ENCODE measurements at regions of chr3 and their contacts with region 1.

Region 1: DNA sequence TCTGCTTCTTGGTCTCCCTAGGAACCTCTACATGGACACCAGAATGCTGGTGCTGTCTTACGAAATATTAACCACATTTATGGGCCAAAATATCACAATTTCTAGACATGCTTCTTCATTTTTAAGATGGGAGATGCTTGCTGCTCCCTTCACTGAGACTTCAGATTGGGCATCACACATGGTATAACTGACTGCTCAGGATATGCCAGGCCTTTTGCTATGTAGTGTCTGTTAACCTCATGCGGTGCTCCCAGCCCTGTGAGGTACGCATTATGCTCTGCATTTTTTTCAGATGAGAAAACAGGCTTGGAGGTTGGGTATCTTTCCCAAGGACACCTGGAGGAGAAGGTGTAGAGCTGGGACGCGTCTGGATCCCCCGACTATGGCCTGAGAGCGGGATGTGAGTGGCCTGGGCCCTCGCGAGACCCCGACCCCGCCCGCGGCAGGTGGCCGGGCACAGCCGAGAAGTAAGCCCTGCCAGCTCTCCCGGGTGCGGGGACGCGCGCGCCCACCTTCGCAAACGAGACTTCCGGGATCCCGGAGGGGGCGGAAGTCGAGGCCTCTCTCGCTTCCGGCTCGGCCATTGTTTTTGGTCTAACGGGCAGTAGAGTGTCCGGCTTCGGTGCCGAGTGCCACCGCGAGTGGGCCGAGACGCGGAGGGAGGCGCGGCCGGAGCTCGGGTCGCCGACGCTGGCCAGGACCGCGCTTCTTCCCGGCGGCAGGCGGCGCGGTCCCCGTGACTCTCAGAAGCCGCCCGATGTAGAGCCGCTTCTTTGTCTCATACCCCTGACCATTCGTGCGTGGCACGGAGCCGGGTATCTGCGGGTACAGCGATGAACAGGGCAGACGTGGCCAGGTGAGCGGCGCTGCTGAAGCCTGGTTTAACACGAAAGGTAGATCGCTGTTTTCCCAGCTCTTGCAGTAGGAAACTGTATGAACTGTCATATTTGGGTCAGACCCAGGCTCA is at the start of gene ZKSCAN7:
- DNase-seq: peak in 13 of 14 experiments; percentile 7 to 59 (median 33)
- ATAC-seq: peak; percentile 54
- H3K4me3 ChIP-seq: peak within 1 kb of the TSS; percentile 65
- H3K4me3 Mint-ChIP-seq: peak within 1 kb of the TSS; percentile 91
- H3K27ac ChIP-seq: no peak within 1 kb of the TSS
- H3K27ac Mint-ChIP-seq: peak within 1 kb of the TSS; percentile 63
- H3K4me1 ChIP-seq: peaks cover 16% of the 10 kb centered on the region
- H3K4me1 Mint-ChIP-seq: peaks cover 27% of the 10 kb centered on the region
- H3K27me3 ChIP-seq: no peaks in the 10 kb centered on the region
- H3K27me3 Mint-ChIP-seq: peaks cover 8% of the 10 kb centered on the region
- CTCF ChIP-seq: no peak
- total RNA-seq, gene ZKSCAN7: 0.20 to 0.49 TPM

Region 2: GRCh38 chr3:44596621-44597020 is 41.7 kb after region 1 on chr3:
- CTCF ChIA-PET with region 1: no interaction called
- POLR2A ChIA-PET with region 1: no interaction called
- intact Hi-C with region 1: no loop called
- DNase-seq: no peak
- ATAC-seq: no peak
- H3K4me3 ChIP-seq: no peak overlapping the region
- H3K4me3 Mint-ChIP-seq: no peak overlapping the region
- H3K27ac ChIP-seq: no peak overlapping the region
- H3K27ac Mint-ChIP-seq: no peak overlapping the region
- H3K4me1 ChIP-seq: no peaks in the 10 kb centered on the region
- H3K4me1 Mint-ChIP-seq: no peaks in the 10 kb centered on the region
- H3K27me3 ChIP-seq: no peaks in the 10 kb centered on the region
- H3K27me3 Mint-ChIP-seq: no peaks in the 10 kb centered on the region
- CTCF ChIP-seq: no peak

Region 3: DNA sequence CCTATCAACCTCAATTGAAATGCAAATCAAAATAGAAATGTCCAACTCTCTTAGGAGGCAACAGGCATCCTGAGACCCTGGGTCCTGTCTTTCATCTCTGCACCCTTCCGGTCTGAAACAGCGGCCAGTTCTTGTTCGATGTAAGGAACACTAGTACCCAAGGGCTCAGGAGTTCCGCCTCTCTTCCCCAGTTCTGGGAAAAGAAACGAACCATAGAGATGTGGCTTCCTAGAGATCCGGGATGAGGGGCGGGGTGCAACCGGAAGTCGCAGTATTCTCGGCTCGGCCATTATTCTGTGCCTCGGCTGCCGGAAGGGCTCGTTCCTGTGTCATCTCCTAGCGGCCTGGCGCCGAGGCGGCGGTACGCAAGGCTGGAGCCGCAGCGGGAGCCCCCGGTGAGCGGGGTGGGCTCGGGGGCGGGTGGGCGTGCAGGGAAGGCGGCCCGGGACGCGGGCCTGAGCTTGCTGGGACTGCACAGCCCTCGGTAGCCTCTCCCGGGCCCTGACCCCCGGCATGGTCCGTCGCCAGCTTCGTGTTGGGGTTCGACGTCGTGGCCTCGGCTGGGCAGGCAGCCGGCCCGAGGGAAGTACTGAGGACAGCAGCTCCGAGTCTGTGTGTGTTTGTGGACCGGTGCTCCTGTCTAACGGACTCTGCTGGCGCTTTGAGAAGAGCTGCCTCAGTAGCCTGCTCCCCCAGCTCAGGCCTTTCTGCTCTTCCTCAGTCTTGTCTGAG is 70.0 kb after region 1 on chr3 and contains the start of gene ZNF197:
- CTCF ChIA-PET with region 1: no interaction called
- POLR2A ChIA-PET with region 1: interaction called, 4 read pairs
- intact Hi-C with region 1: loop called in 1 of 2 experiments (anchors 5 kb)
- DNase-seq: peak; percentile 7 to 70 (median 36)
- ATAC-seq: peak; percentile 56
- H3K4me3 ChIP-seq: peak within 1 kb of the TSS; percentile 93
- H3K4me3 Mint-ChIP-seq: peak within 1 kb of the TSS; percentile 93
- H3K27ac ChIP-seq: no peak within 1 kb of the TSS
- H3K27ac Mint-ChIP-seq: peak within 1 kb of the TSS; percentile 82
- H3K4me1 ChIP-seq: peaks cover 18% of the 10 kb centered on the region
- H3K4me1 Mint-ChIP-seq: peaks cover 54% of the 10 kb centered on the region
- H3K27me3 ChIP-seq: no peaks in the 10 kb centered on the region
- H3K27me3 Mint-ChIP-seq: no peaks in the 10 kb centered on the region
- CTCF ChIP-seq: no peak
- total RNA-seq, gene ZNF197: 3.2 to 3.5 TPM

Region 4: DNA sequence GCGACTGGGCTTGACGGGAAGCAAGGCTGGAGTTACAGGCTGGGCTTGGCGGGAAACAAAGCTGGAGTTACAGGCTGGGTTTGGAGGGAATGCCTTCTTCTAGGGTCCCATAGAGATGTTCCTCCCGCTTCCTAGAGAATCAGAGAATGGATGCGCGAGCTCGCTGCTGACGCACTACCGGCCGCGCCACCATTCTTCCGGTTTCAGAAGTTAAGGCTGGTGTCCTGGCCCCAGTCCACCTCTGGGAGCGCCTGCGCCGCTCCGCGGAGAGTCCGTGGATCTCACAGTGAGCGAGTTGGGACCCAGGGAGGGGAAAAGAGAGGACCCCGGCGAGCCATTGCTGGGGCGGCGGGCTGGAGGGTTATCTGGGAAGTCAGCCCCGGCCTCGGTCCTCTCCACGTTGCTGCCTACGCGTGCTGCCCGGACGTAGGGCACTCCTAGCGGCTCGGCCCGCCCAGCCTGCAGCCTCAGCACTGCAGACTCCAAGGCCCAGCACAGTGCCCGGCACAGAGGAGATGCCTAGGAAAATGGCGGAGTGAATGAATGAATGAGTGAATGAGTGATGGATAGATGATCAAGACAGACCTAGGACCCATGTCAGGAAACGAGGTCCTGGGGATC is 157.7 kb after region 1 on chr3 and contains the start of gene ZNF502:
- CTCF ChIA-PET with region 1: no interaction called
- POLR2A ChIA-PET with region 1: no interaction called
- intact Hi-C with region 1: loop called in 1 of 2 experiments (anchors 10 kb)
- DNase-seq: peak; percentile 3 to 77 (median 43)
- ATAC-seq: peak; percentile 79
- H3K4me3 ChIP-seq: peak within 1 kb of the TSS; percentile 89
- H3K4me3 Mint-ChIP-seq: peak within 1 kb of the TSS; percentile 92
- H3K27ac ChIP-seq: peak within 1 kb of the TSS in 1 of 2 donors; percentile 48
- H3K27ac Mint-ChIP-seq: peak within 1 kb of the TSS; percentile 16
- H3K4me1 ChIP-seq: peaks cover 13% of the 10 kb centered on the region
- H3K4me1 Mint-ChIP-seq: peaks cover 18% of the 10 kb centered on the region
- H3K27me3 ChIP-seq: peaks cover 0 to 4% of the 10 kb centered on the region in 2 experiments
- H3K27me3 Mint-ChIP-seq: peaks cover 38% of the 10 kb centered on the region
- CTCF ChIP-seq: no peak
- total RNA-seq, gene ZNF502: 1.9 to 2.7 TPM

Region 5: DNA sequence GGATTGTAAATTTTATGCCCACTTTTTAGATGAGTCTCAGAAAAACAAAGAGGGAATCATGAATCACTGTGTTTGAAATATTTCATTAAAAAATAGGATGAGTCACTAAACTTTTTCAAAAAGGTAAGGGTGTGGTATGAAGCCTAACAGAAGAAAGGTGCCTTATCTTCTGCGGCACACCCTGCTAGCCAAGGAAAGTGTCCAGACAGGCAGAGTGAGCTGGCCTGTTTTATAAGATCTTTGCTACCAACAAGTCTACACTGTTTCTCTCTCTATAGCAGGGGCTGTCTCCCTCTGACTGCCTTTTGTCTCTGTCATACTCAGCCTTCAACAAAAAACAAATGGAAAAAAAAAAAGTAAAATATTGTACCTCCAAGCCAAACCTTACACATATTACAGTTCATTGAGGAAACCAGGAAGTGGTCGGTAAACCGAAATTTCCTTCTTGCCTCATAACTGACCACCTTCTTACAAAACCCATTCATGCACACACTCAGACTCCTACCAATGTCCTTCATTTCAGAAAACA is 411.9 kb after region 1 on chr3:
- CTCF ChIA-PET with region 1: no interaction called
- POLR2A ChIA-PET with region 1: no interaction called
- intact Hi-C with region 1: loop called in 1 of 2 experiments (anchors 5 kb)
- DNase-seq: peak in 2 of 14 experiments; percentile 17 to 19
- ATAC-seq: no peak
- H3K4me3 ChIP-seq: no peak overlapping the region
- H3K4me3 Mint-ChIP-seq: no peak overlapping the region
- H3K27ac ChIP-seq: no peak overlapping the region
- H3K27ac Mint-ChIP-seq: no peak overlapping the region
- H3K4me1 ChIP-seq: peaks cover 23% of the 10 kb centered on the region
- H3K4me1 Mint-ChIP-seq: peaks cover 92% of the 10 kb centered on the region
- H3K27me3 ChIP-seq: no peaks in the 10 kb centered on the region
- H3K27me3 Mint-ChIP-seq: no peaks in the 10 kb centered on the region
- CTCF ChIP-seq: no peak